Activated CD8-positive, alpha-beta T cell treated with anti-CD3 and anti-CD28 coated beads for 36 hours (primary cell): ENCODE measurements at regions of chr9 and their contacts with region 1.

Region 1: GRCh38 chr9:115013998-115014397 is 83.6 kb upstream of the TNFSF8 start:
- DNase-seq: peak; percentile 80
- ATAC-seq: peak; percentile 87
- H3K4me3 Mint-ChIP-seq: no peak overlapping the region
- H3K27ac Mint-ChIP-seq: peak overlapping the region; percentile 36
- H3K4me1 Mint-ChIP-seq: peaks cover 40% of the 10 kb centered on the region
- H3K27me3 Mint-ChIP-seq: no peaks in the 10 kb centered on the region
- CTCF ChIP-seq: peak; percentile 72

Region 2: DNA sequence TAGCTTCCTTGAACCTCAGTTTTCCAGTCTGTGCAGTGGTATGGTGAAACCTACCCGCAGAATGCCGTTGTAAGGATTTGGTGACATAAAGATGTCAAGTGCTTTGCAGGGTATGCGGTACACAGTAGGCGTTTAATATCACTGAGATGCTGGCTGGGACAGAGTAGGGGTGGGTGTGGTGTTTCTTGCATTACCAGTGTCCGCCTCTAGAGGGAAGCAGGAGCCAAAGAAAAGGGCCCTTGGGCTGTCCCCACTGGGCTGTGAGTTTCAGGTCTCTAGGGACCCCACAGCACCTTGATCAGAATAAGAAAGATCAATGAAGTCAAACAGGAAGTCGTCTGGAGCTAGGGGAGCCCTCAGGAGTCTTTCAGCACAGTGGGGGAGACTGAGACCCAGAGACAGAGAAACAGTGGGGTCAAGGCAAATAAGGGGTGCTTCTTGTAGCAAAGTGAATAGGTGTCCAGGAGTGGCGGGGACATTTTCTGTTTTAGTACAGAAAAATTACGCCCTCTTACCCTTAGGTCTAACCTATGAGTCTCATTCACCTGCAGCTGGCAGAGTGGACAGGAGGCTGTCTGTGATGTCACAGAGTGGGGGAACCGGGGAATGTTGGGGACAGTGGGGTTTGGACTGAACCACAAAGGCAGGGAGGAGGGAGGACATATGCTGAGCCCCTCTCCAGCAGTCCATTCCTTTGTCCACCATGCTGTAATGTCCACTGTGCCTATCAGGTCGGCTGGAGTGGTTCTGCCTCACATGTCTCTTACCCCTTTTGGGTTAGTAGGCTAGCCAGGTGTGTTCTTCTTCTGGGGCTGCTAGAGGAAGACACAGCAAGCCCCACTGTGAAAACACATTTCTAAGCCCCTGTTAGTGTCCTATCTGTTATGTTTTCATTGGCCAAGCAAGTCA is 351.7 kb before region 1 on chr9:
- CTCF ChIA-PET with region 1: interaction called, 14 read pairs
- POLR2A ChIA-PET with region 1: no interaction called
- intact Hi-C with region 1: no loop called
- DNase-seq: peak; percentile 79
- ATAC-seq: peak; percentile 97
- H3K4me3 Mint-ChIP-seq: no peak overlapping the region
- H3K27ac Mint-ChIP-seq: no peak overlapping the region
- H3K4me1 Mint-ChIP-seq: peaks cover 19% of the 10 kb centered on the region
- H3K27me3 Mint-ChIP-seq: peaks cover 6% of the 10 kb centered on the region
- CTCF ChIP-seq: peak; percentile 94

Region 3: GRCh38 chr9:114738581-114739316 is 275.2 kb before region 1 on chr9:
- CTCF ChIA-PET with region 1: interaction called, 31 read pairs
- POLR2A ChIA-PET with region 1: interaction called, 4 read pairs
- intact Hi-C with region 1: loop called (anchors 2 kb)
- DNase-seq: peak; percentile 80
- ATAC-seq: peak; percentile 71
- H3K4me3 Mint-ChIP-seq: no peak overlapping the region
- H3K27ac Mint-ChIP-seq: peak overlapping the region; percentile 94
- H3K4me1 Mint-ChIP-seq: peaks cover 53% of the 10 kb centered on the region
- H3K27me3 Mint-ChIP-seq: no peaks in the 10 kb centered on the region
- CTCF ChIP-seq: peak; percentile 75

Region 4: GRCh38 chr9:114919611-114920010 is 94.4 kb before region 1 on chr9:
- CTCF ChIA-PET with region 1: interaction called, 24 read pairs
- POLR2A ChIA-PET with region 1: interaction called, 3 read pairs
- intact Hi-C with region 1: no loop called
- DNase-seq: peak; percentile 43
- ATAC-seq: peak; percentile 77
- H3K4me3 Mint-ChIP-seq: peak overlapping the region; percentile 11
- H3K27ac Mint-ChIP-seq: peak overlapping the region; percentile 83
- H3K4me1 Mint-ChIP-seq: peaks cover 85% of the 10 kb centered on the region
- H3K27me3 Mint-ChIP-seq: no peaks in the 10 kb centered on the region
- CTCF ChIP-seq: no peak

Region 5: DNA sequence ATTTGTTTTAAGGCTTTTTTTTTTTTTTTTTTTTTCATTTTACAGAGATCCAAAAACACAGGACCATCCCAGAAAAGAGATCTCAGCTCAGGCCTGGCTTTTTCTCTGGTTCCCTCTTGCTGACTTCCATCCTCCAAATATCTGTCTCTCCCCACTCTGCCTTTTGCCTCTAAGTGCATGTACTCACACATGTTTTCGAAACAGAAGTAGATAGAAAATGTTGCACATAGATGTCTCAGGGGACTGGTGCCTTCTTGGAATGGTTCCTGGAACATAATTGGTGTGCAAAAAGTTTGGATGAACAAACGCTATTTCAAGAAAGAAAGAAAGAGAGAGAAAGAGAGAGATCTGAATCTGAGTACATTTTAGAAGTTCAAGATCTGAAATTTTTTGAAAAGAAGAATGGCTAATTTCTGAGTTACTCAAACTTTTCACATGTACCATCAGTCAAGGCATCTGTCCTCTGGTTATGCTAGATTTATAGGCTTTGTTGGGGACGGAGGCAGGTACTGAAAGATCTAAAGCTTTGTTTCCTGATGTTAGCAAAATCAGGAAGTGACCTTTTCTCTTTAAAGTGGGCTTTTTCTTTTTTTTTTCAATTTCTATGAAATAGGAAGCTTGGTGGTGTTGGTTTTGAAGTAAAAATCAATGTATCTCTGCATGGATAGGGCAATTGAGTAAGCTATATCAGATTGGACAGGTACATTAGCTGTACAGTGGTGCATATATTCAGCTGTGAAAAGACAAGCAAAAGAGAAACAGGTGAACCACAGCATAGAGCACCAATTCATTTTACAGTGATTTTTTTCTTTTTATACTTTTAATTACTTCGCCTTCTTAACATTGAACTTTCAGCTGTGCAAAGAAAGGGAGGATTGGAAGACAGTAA is 75.1 kb before region 1 on chr9:
- CTCF ChIA-PET with region 1: interaction called, 13 read pairs
- POLR2A ChIA-PET with region 1: no interaction called
- intact Hi-C with region 1: no loop called
- DNase-seq: no peak
- ATAC-seq: peak; percentile 51
- H3K4me3 Mint-ChIP-seq: peak overlapping the region; percentile 4
- H3K27ac Mint-ChIP-seq: peak overlapping the region; percentile 44
- H3K4me1 Mint-ChIP-seq: peaks cover 19% of the 10 kb centered on the region
- H3K27me3 Mint-ChIP-seq: no peaks in the 10 kb centered on the region
- CTCF ChIP-seq: no peak